ENCODE measurements at regions of chr2 and their contacts with region 1.

Region 1: DNA sequence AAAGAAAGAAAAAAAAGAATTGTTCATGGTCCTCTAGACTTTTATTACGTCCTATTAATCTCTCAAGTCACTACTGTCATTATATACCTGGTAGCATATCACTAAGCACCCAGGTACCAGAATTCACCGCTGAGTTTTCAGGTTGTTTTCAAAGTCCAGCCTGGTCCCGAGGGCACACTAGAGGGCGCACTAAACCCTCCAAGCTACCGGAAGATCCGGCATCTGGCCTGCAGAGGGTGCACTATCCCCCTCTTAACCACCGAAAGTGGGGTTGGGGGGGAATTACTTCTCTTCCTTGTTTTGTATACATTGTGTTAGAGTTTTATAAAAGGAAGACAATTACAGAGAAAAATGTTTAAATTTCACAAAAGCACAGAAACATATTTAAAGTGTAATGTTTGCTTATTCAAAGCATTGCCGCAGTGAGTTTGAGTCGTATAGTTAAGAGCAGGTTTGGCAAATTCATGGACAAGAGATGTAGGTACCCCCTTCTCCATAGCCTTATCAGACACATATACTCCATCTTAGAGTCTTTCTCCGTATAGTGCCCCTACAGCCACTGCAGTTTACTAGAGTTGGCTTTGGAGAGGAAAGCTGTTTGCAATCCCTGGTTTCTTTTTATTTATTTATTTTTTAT is 19.2 kb downstream of the MOGAT1 start:
- DNase-seq: peak; percentile 82 to 89
- H3K4me3 ChIP-seq: no peak overlapping the region
- H3K4me3 Mint-ChIP-seq: no peak overlapping the region
- H3K27ac Mint-ChIP-seq: no peak overlapping the region
- H3K4me1 ChIP-seq: no peaks in the 10 kb centered on the region
- H3K4me1 Mint-ChIP-seq: no peaks in the 10 kb centered on the region
- H3K27me3 ChIP-seq: no peaks in the 10 kb centered on the region
- H3K27me3 Mint-ChIP-seq: no peaks in the 10 kb centered on the region
- CTCF ChIP-seq: peak; percentile 100

Region 2: GRCh38 chr2:222655787-222656525 is 34.7 kb before region 1 on chr2 and contains the start of gene FARSB:
- CTCF ChIA-PET with region 1: no interaction called
- POLR2A ChIA-PET with region 1: no interaction called
- intact Hi-C with region 1: loop called (anchors 1 kb)
- DNase-seq: peak; percentile 97 to 98
- H3K4me3 ChIP-seq: peak within 1 kb of the TSS; percentile 96
- H3K4me3 Mint-ChIP-seq: peak within 1 kb of the TSS; percentile 92
- H3K27ac Mint-ChIP-seq: peak within 1 kb of the TSS; percentile 95
- H3K4me1 ChIP-seq: peaks cover 5% of the 10 kb centered on the region; the same call in 1 of the 2 replicates
- H3K4me1 Mint-ChIP-seq: peaks cover 13% of the 10 kb centered on the region
- H3K27me3 ChIP-seq: no peaks in the 10 kb centered on the region
- H3K27me3 Mint-ChIP-seq: no peaks in the 10 kb centered on the region
- CTCF ChIP-seq: no peak
- total RNA-seq, gene FARSB: 48.9 and 50.9 TPM in 2 replicates

Region 3: GRCh38 chr2:222860740-222861410 is 170.2 kb after region 1 on chr2 and contains the start of gene ACSL3:
- CTCF ChIA-PET with region 1: interaction called, 12 read pairs
- POLR2A ChIA-PET with region 1: no interaction called
- intact Hi-C with region 1: loop called (anchors 5 kb)
- DNase-seq: peak; percentile 98 to 100
- H3K4me3 ChIP-seq: peak within 1 kb of the TSS; percentile 99
- H3K4me3 Mint-ChIP-seq: no peak within 1 kb of the TSS
- H3K27ac Mint-ChIP-seq: peak within 1 kb of the TSS; percentile 78
- H3K4me1 ChIP-seq: peaks cover 50% of the 10 kb centered on the region
- H3K4me1 Mint-ChIP-seq: peaks cover 15% of the 10 kb centered on the region
- H3K27me3 ChIP-seq: no peaks in the 10 kb centered on the region; the same call in 1 of the 2 replicates
- H3K27me3 Mint-ChIP-seq: no peaks in the 10 kb centered on the region
- CTCF ChIP-seq: peak in 1 of 2 experiments; percentile 21
- total RNA-seq, gene ACSL3: 181 and 185 TPM in 2 replicates

Region 4: DNA sequence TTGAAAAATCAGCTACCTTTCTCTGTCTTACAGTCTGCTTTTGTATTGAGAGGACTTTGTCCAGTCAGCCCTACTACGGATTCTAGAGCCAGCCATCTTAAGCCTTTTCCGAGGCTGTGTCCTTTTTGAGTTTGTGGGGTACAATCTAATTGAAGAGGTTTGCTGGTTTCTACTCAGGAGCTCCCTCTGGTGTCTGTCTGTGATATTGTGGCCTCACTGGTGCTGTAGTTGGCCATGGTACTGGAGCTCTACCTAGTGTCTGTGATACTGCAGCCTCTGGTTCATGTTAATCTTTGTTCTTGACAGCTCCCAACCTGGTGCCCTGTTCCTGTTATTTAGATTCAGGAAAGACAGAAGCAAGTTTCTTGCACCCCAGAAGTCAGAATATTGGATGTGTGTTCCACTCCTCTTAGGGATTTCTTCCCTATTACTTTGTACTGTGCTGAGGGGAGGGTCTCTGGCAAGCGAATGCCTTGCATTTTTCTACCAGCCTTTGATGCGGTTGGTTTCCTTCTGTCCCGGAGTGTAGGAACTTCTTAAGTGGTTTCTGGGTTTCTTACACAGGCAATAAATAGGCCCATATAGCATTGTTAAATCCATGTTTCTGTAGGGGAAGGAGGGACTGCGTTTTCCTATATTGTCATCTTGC is 248.7 kb after region 1 on chr2:
- CTCF ChIA-PET with region 1: interaction called, 20 read pairs
- POLR2A ChIA-PET with region 1: no interaction called
- intact Hi-C with region 1: loop called (anchors 1 kb)
- DNase-seq: peak; percentile 86 to 91
- H3K4me3 ChIP-seq: no peak overlapping the region
- H3K4me3 Mint-ChIP-seq: no peak overlapping the region
- H3K27ac Mint-ChIP-seq: no peak overlapping the region
- H3K4me1 ChIP-seq: peaks cover 23% of the 10 kb centered on the region
- H3K4me1 Mint-ChIP-seq: peaks cover 23% of the 10 kb centered on the region
- H3K27me3 ChIP-seq: no peaks in the 10 kb centered on the region
- H3K27me3 Mint-ChIP-seq: no peaks in the 10 kb centered on the region
- CTCF ChIP-seq: peak; percentile 97 to 98

Region 5: GRCh38 chr2:223101340-223102039 is 410.8 kb after region 1 on chr2:
- CTCF ChIA-PET with region 1: no interaction called
- POLR2A ChIA-PET with region 1: no interaction called
- intact Hi-C with region 1: loop called (anchors 2 kb)
- DNase-seq: peak; percentile 70 to 73
- H3K4me3 ChIP-seq: no peak overlapping the region
- H3K4me3 Mint-ChIP-seq: no peak overlapping the region
- H3K27ac Mint-ChIP-seq: no peak overlapping the region
- H3K4me1 ChIP-seq: no peaks in the 10 kb centered on the region
- H3K4me1 Mint-ChIP-seq: no peaks in the 10 kb centered on the region
- H3K27me3 ChIP-seq: no peaks in the 10 kb centered on the region
- H3K27me3 Mint-ChIP-seq: peaks cover 7% of the 10 kb centered on the region
- CTCF ChIP-seq: peak; percentile 79 to 90